ENCODE measurements at regions of chr13 and their contacts with region 1.

Region 1: DNA sequence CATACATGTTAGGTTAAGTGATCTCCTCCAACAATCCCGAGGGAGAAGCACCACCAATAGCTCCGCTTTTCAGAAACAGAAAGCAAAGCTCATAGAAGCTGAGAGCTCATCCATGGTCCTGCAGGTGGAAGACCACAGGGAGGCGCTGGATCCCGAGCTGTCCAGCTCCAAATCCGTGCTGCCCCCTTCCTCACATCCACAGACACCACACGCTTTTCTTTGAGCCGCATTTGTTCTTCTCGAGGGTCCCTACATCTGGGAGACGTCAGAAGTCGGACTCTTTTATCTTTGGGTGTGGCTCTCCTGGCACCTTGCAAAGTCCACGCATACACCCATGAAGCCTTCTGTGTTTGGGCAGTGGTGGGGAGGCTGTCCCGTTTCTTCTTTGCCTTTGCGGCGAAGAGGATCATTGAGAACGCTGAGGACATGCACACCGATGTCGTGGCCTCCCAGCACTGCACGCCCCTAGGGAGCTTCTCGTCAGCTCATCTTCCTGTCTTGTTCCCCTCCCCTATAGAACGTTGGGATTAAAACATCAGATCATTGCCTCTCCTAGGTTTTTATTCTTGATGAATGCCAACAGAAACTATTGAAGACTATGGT is 184.8 kb downstream of the TEX29 start:
- DNase-seq: peak; percentile 79
- ATAC-seq: peak; percentile 99
- H3K4me3 Mint-ChIP-seq: no peak overlapping the region
- H3K27ac Mint-ChIP-seq: no peak overlapping the region
- H3K4me1 Mint-ChIP-seq: 0 out of 2 replicates have a peak, but pooled peaks cover 7% of the 10 kb centered on the region
- H3K27me3 Mint-ChIP-seq: peaks cover 14% of the 10 kb centered on the region
- CTCF ChIP-seq: 0 out of 2 replicates have a peak, but pooled peaks have one; percentile 26

Region 2: GRCh38 chr13:111323950-111324651 is 181.2 kb before region 1 on chr13:
- CTCF ChIA-PET with region 1: no interaction called
- POLR2A ChIA-PET with region 1: no interaction called
- DNase-seq: no peak
- ATAC-seq: no peak
- H3K4me3 Mint-ChIP-seq: no peak overlapping the region
- H3K27ac Mint-ChIP-seq: peak overlapping the region; percentile 65; the same call in 1 of the 2 replicates
- H3K4me1 Mint-ChIP-seq: no peaks in the 10 kb centered on the region
- H3K27me3 Mint-ChIP-seq: no peaks in the 10 kb centered on the region
- CTCF ChIP-seq: no peak

Region 3: DNA sequence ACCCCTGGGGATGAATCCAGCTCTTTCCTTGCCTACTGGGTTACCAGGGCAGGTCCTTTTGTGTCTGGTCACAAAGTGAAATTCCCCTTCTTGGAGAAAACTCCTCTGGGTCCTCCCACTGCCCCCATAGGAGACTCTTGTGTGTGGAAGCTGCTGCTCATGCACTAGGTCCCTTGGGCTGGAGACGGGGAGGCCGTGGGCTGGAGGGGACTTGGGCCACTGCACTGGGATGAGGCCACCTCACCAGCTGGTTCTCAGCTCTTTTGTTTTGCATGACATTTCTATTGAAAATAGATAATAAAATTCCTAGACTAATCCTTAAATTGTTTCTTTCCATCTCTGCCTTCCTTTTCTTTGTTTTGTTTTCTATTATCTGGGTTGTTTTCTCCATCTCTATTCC is 122.4 kb before region 1 on chr13:
- CTCF ChIA-PET with region 1: no interaction called
- POLR2A ChIA-PET with region 1: no interaction called
- DNase-seq: no peak
- ATAC-seq: no peak
- H3K4me3 Mint-ChIP-seq: no peak overlapping the region
- H3K27ac Mint-ChIP-seq: no peak overlapping the region
- H3K4me1 Mint-ChIP-seq: peaks cover 4% of the 10 kb centered on the region; the same call in 1 of the 2 replicates
- H3K27me3 Mint-ChIP-seq: no peaks in the 10 kb centered on the region; the same call in 1 of the 2 replicates
- CTCF ChIP-seq: no peak

Region 4: GRCh38 chr13:111398715-111399299 is 106.5 kb before region 1 on chr13:
- CTCF ChIA-PET with region 1: no interaction called
- POLR2A ChIA-PET with region 1: no interaction called
- DNase-seq: no peak
- ATAC-seq: no peak
- H3K4me3 Mint-ChIP-seq: no peak overlapping the region
- H3K27ac Mint-ChIP-seq: no peak overlapping the region
- H3K4me1 Mint-ChIP-seq: no peaks in the 10 kb centered on the region
- H3K27me3 Mint-ChIP-seq: no peaks in the 10 kb centered on the region
- CTCF ChIP-seq: no peak

Region 5: GRCh38 chr13:111474136-111475002 is 30.9 kb before region 1 on chr13:
- CTCF ChIA-PET with region 1: interaction called, 39 read pairs
- POLR2A ChIA-PET with region 1: no interaction called
- DNase-seq: no peak
- ATAC-seq: peak; percentile 86
- H3K4me3 Mint-ChIP-seq: no peak overlapping the region
- H3K27ac Mint-ChIP-seq: no peak overlapping the region
- H3K4me1 Mint-ChIP-seq: no peaks in the 10 kb centered on the region
- H3K27me3 Mint-ChIP-seq: no peaks in the 10 kb centered on the region
- CTCF ChIP-seq: peak; percentile 50

Region 6: DNA sequence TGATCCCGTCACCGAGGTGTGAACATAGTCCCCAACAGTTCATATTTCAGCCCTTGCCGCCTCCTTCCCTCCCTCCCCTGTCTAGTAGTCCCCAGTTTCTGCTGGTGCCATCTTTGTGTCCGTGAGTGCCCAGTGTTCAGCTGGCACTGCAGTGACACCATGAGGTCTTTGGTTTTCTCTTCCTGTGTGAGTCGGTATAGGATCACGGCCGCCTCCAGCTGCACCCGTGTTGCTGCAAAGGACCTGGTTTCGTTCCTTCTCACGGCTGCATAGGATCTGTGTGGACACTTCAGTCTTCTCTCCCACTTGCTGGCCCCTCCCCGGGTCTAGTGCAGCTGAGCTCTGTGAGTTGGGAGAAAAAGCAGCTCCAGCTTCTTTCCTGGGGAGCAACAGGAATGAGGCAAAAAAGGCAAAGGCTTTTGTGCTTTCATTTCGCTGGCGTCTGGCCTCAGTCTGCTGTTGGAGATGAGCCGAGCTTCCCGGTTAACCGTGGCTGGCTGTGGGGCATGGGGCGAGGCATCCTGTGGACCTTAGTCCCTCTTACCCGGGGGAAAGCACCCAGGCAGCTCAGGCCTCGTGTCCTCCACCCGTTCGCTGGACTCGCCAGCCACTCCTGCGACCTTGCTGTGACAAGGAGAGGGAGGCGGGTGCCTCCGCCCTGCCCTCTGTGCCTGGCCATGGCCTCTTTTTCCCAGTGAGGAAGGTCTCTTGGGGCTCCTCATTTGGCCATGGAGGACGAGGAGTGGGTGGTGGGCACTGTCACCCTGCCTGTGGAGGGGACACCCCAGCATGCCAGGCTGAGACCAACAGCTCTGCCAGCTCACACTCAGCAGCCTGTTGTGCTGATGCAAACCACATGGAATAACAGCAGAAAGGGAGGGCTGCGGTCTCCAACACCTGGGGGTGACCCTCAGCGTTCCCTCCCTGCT is 11.7 kb after region 1 on chr13:
- CTCF ChIA-PET with region 1: interaction called, 10 read pairs
- POLR2A ChIA-PET with region 1: no interaction called
- DNase-seq: no peak
- ATAC-seq: no peak; the same call in 1 of the 2 replicates
- H3K4me3 Mint-ChIP-seq: no peak overlapping the region
- H3K27ac Mint-ChIP-seq: no peak overlapping the region; the same call in 1 of the 2 replicates
- H3K4me1 Mint-ChIP-seq: peaks cover 3% of the 10 kb centered on the region; the same call in 1 of the 2 replicates
- H3K27me3 Mint-ChIP-seq: no peaks in the 10 kb centered on the region
- CTCF ChIP-seq: no peak

Region 7: DNA sequence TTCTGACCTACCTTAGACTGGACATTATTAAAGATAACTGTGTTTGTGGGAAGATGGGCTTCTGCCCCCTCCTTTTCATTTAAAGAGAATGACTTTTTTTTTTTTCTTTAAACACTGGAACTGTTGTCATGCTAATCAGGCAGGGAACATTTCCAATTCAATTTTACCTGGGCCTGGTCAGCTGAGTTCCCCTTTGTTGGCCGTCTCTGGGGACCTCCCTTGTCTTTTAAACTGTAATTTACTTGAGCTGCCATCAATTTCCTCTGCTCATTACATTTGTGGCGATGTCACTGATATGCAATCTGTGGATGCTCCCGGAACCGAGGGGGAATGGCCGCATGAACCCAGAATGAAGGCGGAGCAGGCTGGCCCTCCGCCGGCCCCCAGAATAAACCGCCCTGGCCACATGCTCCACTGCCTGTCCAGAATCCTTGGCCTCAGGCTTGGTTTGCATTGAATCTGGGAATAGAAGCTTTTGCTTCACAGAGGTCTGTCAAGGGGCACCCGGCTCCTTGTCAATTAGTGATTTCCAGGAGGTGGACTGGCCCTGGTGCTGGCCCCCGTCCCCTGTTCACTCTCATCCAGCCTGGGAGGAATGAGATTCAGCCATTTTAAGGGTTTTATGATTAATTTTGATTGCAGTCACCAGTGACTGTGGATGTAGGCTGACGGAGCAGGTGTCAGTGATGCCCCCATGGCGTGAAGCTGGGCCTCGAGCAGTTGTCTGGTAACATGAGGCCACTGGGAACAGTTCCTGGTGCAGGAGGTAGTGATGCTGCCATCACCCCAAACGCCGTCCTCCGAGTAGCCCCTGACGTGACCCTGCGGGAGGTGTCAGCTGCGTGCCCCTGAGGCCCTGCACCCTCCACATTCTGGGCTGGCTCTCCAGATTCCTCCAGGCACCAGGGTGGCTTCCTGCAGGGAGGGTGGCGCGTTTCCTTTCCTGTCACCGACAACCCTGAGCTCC is 92.1 kb after region 1 on chr13:
- CTCF ChIA-PET with region 1: interaction called, 11 read pairs
- POLR2A ChIA-PET with region 1: no interaction called
- DNase-seq: no peak
- ATAC-seq: peak; percentile 57
- H3K4me3 Mint-ChIP-seq: no peak overlapping the region
- H3K27ac Mint-ChIP-seq: no peak overlapping the region
- H3K4me1 Mint-ChIP-seq: peaks cover 38% of the 10 kb centered on the region
- H3K27me3 Mint-ChIP-seq: peaks cover 8% of the 10 kb centered on the region
- CTCF ChIP-seq: no peak

Region 8: GRCh38 chr13:111658145-111659100 is 153.1 kb after region 1 on chr13:
- CTCF ChIA-PET with region 1: interaction called, 10 read pairs
- POLR2A ChIA-PET with region 1: no interaction called
- DNase-seq: peak; percentile 56
- ATAC-seq: peak; percentile 96
- H3K4me3 Mint-ChIP-seq: no peak overlapping the region; the same call in 1 of the 2 replicates
- H3K27ac Mint-ChIP-seq: peak overlapping the region; percentile 29; the same call in 1 of the 2 replicates
- H3K4me1 Mint-ChIP-seq: peaks cover 17% of the 10 kb centered on the region
- H3K27me3 Mint-ChIP-seq: peaks cover 2% of the 10 kb centered on the region; the same call in 1 of the 2 replicates
- CTCF ChIP-seq: no peak

Measured in WTC11 (cell line).